ENCODE measurements at regions of chr17 and their contacts with region 1.

Region 1: GRCh38 chr17:48850792-48851323 is 20.0 kb downstream of the CALCOCO2 start:
- DNase-seq: no peak
- H3K4me3 ChIP-seq: no peak overlapping the region
- H3K27ac ChIP-seq: no peak overlapping the region
- H3K4me1 ChIP-seq: no peaks in the 10 kb centered on the region
- H3K27me3 ChIP-seq: no peaks in the 10 kb centered on the region
- CTCF ChIP-seq: no peak

Region 2: GRCh38 chr17:48836004-48836403 is 14.9 kb before region 1 on chr17:
- CTCF ChIA-PET with region 1: no interaction called
- POLR2A ChIA-PET with region 1: interaction called, 17 read pairs
- intact Hi-C with region 1: no loop called
- DNase-seq: no peak
- H3K4me3 ChIP-seq: no peak overlapping the region
- H3K27ac ChIP-seq: no peak overlapping the region
- H3K4me1 ChIP-seq: peaks cover 11% of the 10 kb centered on the region
- H3K27me3 ChIP-seq: no peaks in the 10 kb centered on the region
- CTCF ChIP-seq: no peak

Measured in A673 (cell line).